PC-3 (cell line): ENCODE measurements at regions of chr2 and their contacts with region 1.

Region 1: DNA sequence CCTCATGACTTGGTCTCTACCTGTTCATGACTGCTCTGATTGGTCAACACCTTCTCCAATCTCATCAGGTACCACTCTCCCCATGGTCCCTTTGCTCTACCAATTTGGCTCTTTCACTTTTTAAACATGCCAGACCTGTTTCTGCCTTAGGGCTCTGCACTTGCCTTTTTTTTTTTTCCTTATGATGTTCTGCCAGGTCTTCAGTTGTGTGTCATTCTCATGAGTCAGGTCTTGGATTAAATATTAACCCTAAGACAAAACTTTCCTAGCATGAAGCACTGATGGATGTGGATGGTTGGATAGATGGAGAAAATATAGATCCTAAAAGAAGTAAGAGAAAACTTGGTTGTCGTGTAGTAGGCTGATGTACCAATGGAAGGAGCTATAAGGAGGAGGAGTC is 219.3 kb downstream of the TTC32 start:
- DNase-seq: peak; percentile 89
- ATAC-seq: peak; percentile 73
- H3K4me3 ChIP-seq: no peak overlapping the region; the same call in 1 of the 2 replicates
- H3K27ac ChIP-seq: no peak overlapping the region
- H3K4me1 ChIP-seq: peaks cover 18% of the 10 kb centered on the region
- H3K27me3 ChIP-seq: no peaks in the 10 kb centered on the region
- CTCF ChIP-seq: no peak

Region 2: DNA sequence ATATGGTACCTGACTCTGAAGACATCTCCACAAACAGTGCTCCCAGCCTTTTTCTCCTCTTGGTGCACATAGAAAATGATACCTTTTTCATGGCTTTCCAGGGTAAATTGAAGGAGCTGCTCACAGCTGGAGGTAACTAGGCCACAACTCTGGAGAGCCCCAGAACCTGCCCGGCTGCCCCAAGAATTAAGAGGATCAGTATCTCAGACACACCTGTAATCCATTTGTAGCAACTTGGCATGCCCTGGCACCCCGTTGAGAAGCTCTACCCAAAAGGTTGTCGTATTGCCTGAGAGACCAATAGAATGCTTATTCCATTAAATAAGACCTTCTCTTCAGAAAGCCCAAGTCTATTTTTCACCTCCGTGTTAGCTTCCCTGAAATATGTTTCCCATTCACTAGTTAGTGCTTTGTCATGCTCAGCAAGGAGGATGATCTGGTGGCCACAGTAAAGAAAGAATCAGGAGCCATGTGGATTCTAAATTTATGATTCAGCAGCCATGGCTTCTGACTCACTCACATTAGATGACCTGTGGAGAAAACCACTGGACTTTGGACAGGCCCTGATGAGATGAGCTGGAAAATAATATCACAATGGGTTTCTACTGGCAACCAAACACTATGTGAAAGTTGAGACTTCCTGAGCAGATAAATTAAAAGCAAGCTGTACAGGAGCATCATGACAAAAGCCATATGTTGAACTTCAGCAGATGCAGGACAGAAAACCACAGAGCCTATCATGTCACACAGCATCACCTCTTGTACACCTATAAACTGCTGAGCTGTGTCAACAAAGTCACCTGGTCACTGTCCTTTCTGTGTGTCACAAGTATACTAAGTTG is 70.8 kb before region 1 on chr2:
- CTCF ChIA-PET with region 1: no interaction called
- POLR2A ChIA-PET with region 1: no interaction called
- intact Hi-C with region 1: no loop called
- DNase-seq: peak; percentile 96
- ATAC-seq: peak; percentile 88
- H3K4me3 ChIP-seq: no peak overlapping the region
- H3K27ac ChIP-seq: peak overlapping the region; percentile 93
- H3K4me1 ChIP-seq: peaks cover 32% of the 10 kb centered on the region
- H3K27me3 ChIP-seq: no peaks in the 10 kb centered on the region
- CTCF ChIP-seq: no peak

Region 3: DNA sequence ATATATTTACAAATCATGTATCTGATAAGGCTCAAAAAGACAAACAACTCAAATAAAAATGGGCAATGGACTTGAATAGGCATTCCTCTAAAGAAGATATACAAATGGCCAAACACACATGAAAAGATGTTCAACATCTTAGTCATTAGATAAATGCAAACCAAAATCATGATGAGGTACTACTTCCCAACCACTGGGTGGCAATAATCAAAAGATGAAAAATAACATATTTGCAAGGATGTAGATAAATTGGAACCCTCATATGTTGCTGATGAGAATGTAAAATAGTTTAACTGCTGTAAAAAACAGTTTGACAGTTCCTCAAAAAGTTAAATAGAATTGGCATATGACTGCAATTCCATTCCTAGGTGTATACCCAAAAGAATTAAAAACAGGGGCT is 87.0 kb after region 1 on chr2:
- CTCF ChIA-PET with region 1: no interaction called
- POLR2A ChIA-PET with region 1: no interaction called
- intact Hi-C with region 1: loop called (anchors 5 kb)
- DNase-seq: peak; percentile 55
- ATAC-seq: no peak
- H3K4me3 ChIP-seq: no peak overlapping the region
- H3K27ac ChIP-seq: no peak overlapping the region
- H3K4me1 ChIP-seq: no peaks in the 10 kb centered on the region
- H3K27me3 ChIP-seq: no peaks in the 10 kb centered on the region
- CTCF ChIP-seq: peak; percentile 64

Region 4: GRCh38 chr2:19879120-19879519 is 196.6 kb after region 1 on chr2:
- CTCF ChIA-PET with region 1: no interaction called
- POLR2A ChIA-PET with region 1: no interaction called
- intact Hi-C with region 1: no loop called
- DNase-seq: no peak
- ATAC-seq: no peak
- H3K4me3 ChIP-seq: no peak overlapping the region
- H3K27ac ChIP-seq: no peak overlapping the region
- H3K4me1 ChIP-seq: no peaks in the 10 kb centered on the region
- H3K27me3 ChIP-seq: no peaks in the 10 kb centered on the region
- CTCF ChIP-seq: no peak